T-cell (primary cell): ENCODE measurements at regions of chr3 and their contacts with region 1.

Region 1: GRCh38 chr3:15205934-15206661 is at the start of gene CAPN7:
- DNase-seq: peak; percentile 85 to 98 (median 91)
- ATAC-seq: peak; percentile 90 to 96 (median 93)
- H3K4me3 ChIP-seq: peak within 1 kb of the TSS; percentile 86 to 87
- H3K4me3 Mint-ChIP-seq: peak within 1 kb of the TSS; percentile 88 to 93 (median 91)
- H3K27ac ChIP-seq: peak within 1 kb of the TSS; percentile 80
- H3K27ac Mint-ChIP-seq: peak within 1 kb of the TSS; percentile 93
- H3K4me1 ChIP-seq: peaks cover 17 to 20% of the 10 kb centered on the region in 2 experiments
- H3K4me1 Mint-ChIP-seq: peaks cover 34 to 45% (median 38%) of the 10 kb centered on the region in 3 donors
- H3K27me3 ChIP-seq: no peaks in the 10 kb centered on the region
- H3K27me3 Mint-ChIP-seq: no peaks in the 10 kb centered on the region
- total RNA-seq, gene CAPN7: 62.2 to 82.5 (median 74.6) TPM

Region 2: DNA sequence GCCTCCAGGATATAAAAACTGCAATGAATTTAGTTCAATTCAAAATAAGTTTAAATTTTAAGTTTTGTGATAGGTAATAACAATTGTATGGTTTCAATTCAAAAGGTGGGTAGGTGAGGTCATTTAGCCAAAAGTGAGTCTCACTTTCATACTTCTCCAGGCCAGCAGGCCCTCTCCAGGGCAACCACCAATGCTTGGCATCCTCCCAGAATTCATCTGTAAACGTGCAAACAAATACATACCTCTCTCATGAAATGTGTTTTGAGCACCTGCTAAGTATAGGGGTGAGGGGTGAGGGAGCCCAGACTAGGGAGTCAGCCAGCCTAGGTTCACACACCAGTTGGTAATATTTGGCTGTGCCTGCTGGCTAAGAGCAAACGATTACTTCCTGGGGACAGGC is 85.1 kb before region 1 on chr3:
- CTCF ChIA-PET with region 1: no interaction called
- POLR2A ChIA-PET with region 1: no interaction called
- DNase-seq: no peak
- ATAC-seq: no peak
- H3K4me3 ChIP-seq: no peak overlapping the region
- H3K4me3 Mint-ChIP-seq: no peak overlapping the region
- H3K27ac ChIP-seq: no peak overlapping the region
- H3K27ac Mint-ChIP-seq: no peak overlapping the region
- H3K4me1 ChIP-seq: peaks cover 0 to 8% of the 10 kb centered on the region in 2 experiments
- H3K4me1 Mint-ChIP-seq: peaks cover 0 to 6% (median 2%) of the 10 kb centered on the region in 3 donors
- H3K27me3 ChIP-seq: peaks cover 0 to 10% of the 10 kb centered on the region in 2 experiments
- H3K27me3 Mint-ChIP-seq: peaks cover 0 to 6% of the 10 kb centered on the region in 2 donors

Region 3: DNA sequence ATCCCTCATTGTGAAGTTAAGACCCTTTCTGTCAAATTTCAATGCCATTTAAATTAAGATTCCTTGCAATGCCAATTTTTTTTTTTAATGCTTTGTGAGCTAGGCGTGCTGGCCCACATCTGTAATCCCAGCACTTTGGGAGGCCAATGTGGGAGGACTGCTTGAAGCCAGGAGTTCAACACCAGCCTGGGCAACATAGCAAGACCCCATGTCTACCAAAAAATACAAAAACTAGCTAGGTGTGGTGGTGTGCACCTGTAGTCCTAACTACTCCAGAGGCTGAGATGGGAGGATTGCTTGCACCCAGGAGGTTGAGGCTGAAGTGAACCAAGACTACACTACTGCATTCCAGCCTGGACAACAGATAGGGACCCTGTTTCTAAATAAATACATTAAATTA is 131.9 kb after region 1 on chr3:
- CTCF ChIA-PET with region 1: no interaction called
- POLR2A ChIA-PET with region 1: interaction called in 1 of 2 experiments, 13 read pairs
- DNase-seq: no peak
- ATAC-seq: no peak
- H3K4me3 ChIP-seq: no peak overlapping the region
- H3K4me3 Mint-ChIP-seq: no peak overlapping the region
- H3K27ac ChIP-seq: no peak overlapping the region
- H3K27ac Mint-ChIP-seq: no peak overlapping the region
- H3K4me1 ChIP-seq: peaks cover 2 to 11% of the 10 kb centered on the region in 2 experiments
- H3K4me1 Mint-ChIP-seq: peaks cover 17 to 42% (median 37%) of the 10 kb centered on the region in 3 donors
- H3K27me3 ChIP-seq: no peaks in the 10 kb centered on the region
- H3K27me3 Mint-ChIP-seq: no peaks in the 10 kb centered on the region

Region 4: DNA sequence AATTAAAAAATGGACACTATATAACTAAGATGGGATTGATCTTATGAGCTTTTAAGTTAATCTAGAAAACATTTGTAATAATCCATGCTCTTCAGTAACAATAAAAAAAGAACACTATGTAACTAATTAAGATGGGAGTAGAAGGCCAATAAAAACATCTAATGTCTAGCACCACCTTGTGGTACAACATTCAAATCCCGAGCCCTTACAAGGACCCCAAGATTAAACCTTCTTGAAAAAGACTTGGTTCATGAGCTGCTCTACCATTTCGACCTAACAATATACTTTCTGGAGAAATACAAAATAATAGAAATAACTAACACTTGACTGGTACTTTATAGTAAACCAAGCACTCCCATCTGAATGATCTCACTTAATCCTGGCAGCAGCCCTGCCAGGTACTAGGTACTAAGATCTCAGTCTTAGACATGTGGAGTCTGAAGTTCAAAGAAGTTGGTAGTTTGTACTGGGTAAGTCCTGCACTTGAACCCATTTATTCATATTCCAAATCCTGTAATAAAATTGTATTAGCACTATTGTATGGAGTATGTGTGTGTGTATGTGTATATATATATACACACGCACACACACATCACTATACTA is 199.5 kb after region 1 on chr3:
- CTCF ChIA-PET with region 1: interaction called, 22 to 82 read pairs
- POLR2A ChIA-PET with region 1: interaction called in 1 of 2 experiments, 3 read pairs
- DNase-seq: peak in 7 of 35 experiments; percentile 12 to 76 (median 21)
- ATAC-seq: peak in 2 of 4 experiments; percentile 43 to 69
- H3K4me3 ChIP-seq: no peak overlapping the region
- H3K4me3 Mint-ChIP-seq: no peak overlapping the region
- H3K27ac ChIP-seq: no peak overlapping the region
- H3K27ac Mint-ChIP-seq: no peak overlapping the region
- H3K4me1 ChIP-seq: peaks cover 0 to 2% of the 10 kb centered on the region in 2 experiments
- H3K4me1 Mint-ChIP-seq: peaks cover 0 to 16% (median 7%) of the 10 kb centered on the region in 3 donors
- H3K27me3 ChIP-seq: no peaks in the 10 kb centered on the region
- H3K27me3 Mint-ChIP-seq: no peaks in the 10 kb centered on the region

Region 5: DNA sequence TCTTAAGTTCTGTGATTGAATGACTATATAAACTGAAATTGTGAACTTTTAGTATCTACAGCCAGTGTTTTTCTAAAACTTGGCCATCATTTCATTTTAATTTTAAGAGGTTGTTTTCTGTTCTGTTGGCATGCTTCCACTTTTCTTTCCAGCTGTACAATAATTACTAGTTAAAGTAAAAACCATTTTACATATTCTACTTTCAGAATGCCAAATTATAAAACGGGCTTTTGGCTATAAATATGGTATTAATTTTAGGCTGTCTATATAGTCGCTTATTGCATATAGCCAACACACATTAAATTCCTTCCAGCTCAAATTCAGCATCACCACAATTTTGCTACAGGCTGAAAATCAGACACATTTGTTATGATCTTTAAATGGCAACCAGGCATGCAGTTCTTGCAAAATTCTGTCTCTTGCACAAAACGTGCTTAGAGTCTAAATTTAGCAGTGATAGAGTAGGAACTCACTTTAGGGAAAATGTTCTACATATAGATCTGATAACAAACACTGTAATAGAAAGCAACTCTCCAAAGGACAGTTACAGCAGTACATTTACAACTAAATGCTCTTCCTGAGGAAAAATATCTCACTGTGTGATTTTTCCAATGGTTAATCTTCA is 476.6 kb after region 1 on chr3:
- CTCF ChIA-PET with region 1: no interaction called
- POLR2A ChIA-PET with region 1: no interaction called
- DNase-seq: no peak
- ATAC-seq: no peak
- H3K4me3 ChIP-seq: no peak overlapping the region
- H3K4me3 Mint-ChIP-seq: no peak overlapping the region
- H3K27ac ChIP-seq: no peak overlapping the region
- H3K27ac Mint-ChIP-seq: no peak overlapping the region
- H3K4me1 ChIP-seq: peaks cover 0 to 2% of the 10 kb centered on the region in 2 experiments
- H3K4me1 Mint-ChIP-seq: peaks cover 0 to 10% (median 8%) of the 10 kb centered on the region in 3 donors
- H3K27me3 ChIP-seq: no peaks in the 10 kb centered on the region
- H3K27me3 Mint-ChIP-seq: no peaks in the 10 kb centered on the region